Ascending aorta (tissue), 2 donors: ENCODE measurements at regions of chr15 and their contacts with region 1.

Region 1: DNA sequence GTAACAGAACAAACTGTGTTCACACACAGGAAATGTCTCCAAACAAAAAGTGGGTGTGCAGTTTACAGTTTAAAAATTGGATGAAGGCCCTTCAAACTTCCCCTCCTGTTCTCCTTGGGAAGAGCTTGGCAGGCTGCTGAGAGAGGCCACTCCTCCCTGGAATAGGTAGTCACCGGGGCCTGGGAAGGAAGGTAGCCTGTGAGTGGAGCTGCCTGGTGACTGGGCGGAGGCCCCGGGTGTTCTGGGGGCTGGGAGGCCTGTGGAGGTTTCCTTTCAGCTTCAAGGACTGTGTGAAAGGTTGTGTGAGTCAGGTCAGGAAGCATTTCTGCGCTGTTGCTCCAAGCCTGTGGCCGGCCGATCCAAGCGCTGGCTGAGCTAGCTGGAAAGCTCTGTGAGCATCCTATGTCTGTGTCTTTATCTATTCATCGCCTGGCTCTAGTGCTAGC is 14.1 kb downstream of the SLCO3A1 start:
- DNase-seq: peak; percentile 59 to 92
- H3K4me3 ChIP-seq: peak overlapping the region in 1 of 2 donors; percentile 25
- H3K27ac ChIP-seq: peak overlapping the region; percentile 77 to 90
- H3K4me1 ChIP-seq: peaks cover 11 to 43% of the 10 kb centered on the region in 2 donors
- H3K27me3 ChIP-seq: no peaks in the 10 kb centered on the region
- CTCF ChIP-seq: no peak

Region 2: GRCh38 chr15:91885714-91886270 is 18.2 kb after region 1 on chr15:
- intact Hi-C with region 1: no loop called
- DNase-seq: no peak
- H3K4me3 ChIP-seq: no peak overlapping the region
- H3K27ac ChIP-seq: no peak overlapping the region
- H3K4me1 ChIP-seq: peaks cover 0 to 5% of the 10 kb centered on the region in 2 donors
- H3K27me3 ChIP-seq: no peaks in the 10 kb centered on the region
- CTCF ChIP-seq: no peak

Region 3: GRCh38 chr15:91926908-91927270 is 59.3 kb after region 1 on chr15:
- intact Hi-C with region 1: loop called (anchors 2 kb)
- DNase-seq: no peak
- H3K4me3 ChIP-seq: peak overlapping the region in 1 of 2 donors; percentile 46
- H3K27ac ChIP-seq: peak overlapping the region; percentile 73 to 74
- H3K4me1 ChIP-seq: peaks cover 10 to 35% of the 10 kb centered on the region in 2 donors
- H3K27me3 ChIP-seq: no peaks in the 10 kb centered on the region
- CTCF ChIP-seq: no peak

Region 4: GRCh38 chr15:91981821-91982801 is 114.5 kb after region 1 on chr15:
- intact Hi-C with region 1: loop called (anchors 5 kb)
- DNase-seq: no peak
- H3K4me3 ChIP-seq: no peak overlapping the region
- H3K27ac ChIP-seq: peak overlapping the region; percentile 73 to 79
- H3K4me1 ChIP-seq: peaks cover 11 to 41% of the 10 kb centered on the region in 2 donors
- H3K27me3 ChIP-seq: no peaks in the 10 kb centered on the region
- CTCF ChIP-seq: peak in 2 of 3 experiments; percentile 14 to 36

Region 5: GRCh38 chr15:92011611-92012367 is 144.2 kb after region 1 on chr15:
- intact Hi-C with region 1: loop called (anchors 5 kb)
- DNase-seq: peak in 1 of 2 donors; percentile 72
- H3K4me3 ChIP-seq: peak overlapping the region; percentile 18 to 49
- H3K27ac ChIP-seq: peak overlapping the region; percentile 74 to 76
- H3K4me1 ChIP-seq: peaks cover 4 to 43% of the 10 kb centered on the region in 2 donors
- H3K27me3 ChIP-seq: no peaks in the 10 kb centered on the region
- CTCF ChIP-seq: no peak

Region 6: DNA sequence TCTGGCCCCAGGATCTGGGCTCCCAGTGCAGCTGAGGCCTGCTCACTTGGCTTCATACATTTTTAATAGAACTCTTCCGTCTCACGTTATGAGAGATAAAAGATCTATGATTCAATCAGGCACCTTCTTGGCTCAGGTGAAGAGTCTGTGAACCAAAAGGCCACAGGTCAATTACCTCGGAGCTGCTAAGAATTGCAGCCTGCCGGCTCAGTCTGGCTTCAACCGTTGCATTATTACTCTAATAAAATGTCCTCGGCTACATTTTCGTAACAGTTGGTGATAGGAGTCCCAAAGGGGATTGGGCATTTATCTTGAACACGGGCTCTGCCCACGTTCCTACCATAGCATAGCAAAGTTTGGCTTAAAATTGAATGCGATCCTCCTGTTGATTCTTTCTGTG is 162.2 kb after region 1 on chr15:
- intact Hi-C with region 1: loop called (anchors 5 kb)
- DNase-seq: no peak
- H3K4me3 ChIP-seq: peak overlapping the region in 1 of 2 donors; percentile 40
- H3K27ac ChIP-seq: peak overlapping the region; percentile 87 to 88
- H3K4me1 ChIP-seq: peaks cover 8 to 41% of the 10 kb centered on the region in 2 donors
- H3K27me3 ChIP-seq: no peaks in the 10 kb centered on the region
- CTCF ChIP-seq: no peak

Region 7: GRCh38 chr15:92077353-92078085 is 209.9 kb after region 1 on chr15:
- intact Hi-C with region 1: loop called (anchors 5 kb)
- DNase-seq: peak in 1 of 2 donors; percentile 86
- H3K4me3 ChIP-seq: no peak overlapping the region
- H3K27ac ChIP-seq: no peak overlapping the region
- H3K4me1 ChIP-seq: peaks cover 0 to 8% of the 10 kb centered on the region in 2 donors
- H3K27me3 ChIP-seq: no peaks in the 10 kb centered on the region
- CTCF ChIP-seq: peak; percentile 74 to 84 (median 78)